ENCODE measurements at regions of chr17 and their contacts with region 1.

Region 1: DNA sequence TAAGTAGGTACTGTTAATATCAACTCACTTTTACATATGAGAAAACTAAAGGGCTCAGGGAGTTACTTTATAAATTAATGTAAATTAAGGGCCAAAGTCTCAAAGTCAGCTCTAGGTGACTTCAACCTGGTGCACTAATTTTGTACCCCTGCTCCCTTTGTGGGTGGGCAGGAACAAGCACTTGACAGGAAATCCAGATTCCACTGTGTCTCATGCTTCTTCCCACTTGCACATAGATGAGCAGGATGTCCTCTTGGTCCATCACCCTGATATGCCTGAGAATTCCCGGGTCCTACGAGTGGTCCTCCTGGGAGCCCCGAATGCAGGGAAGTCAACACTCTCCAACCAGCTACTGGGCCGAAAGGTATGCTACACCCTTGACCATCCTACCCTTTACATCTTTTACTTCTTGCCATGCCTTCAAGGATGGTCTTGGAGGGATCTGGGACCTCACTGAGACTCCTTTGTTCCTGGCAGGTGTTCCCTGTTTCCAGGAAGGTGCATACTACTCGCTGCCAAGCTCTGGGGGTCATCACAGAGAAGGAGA is 1.3 kb downstream of the ERAL1 start:
- DNase-seq: no peak
- H3K4me3 ChIP-seq: peak overlapping the region; percentile 65; the same call in 1 of the 2 replicates
- H3K27ac ChIP-seq: no peak overlapping the region
- H3K4me1 ChIP-seq: peaks cover 5% of the 10 kb centered on the region; the same call in 1 of the 2 replicates
- H3K27me3 ChIP-seq: no peaks in the 10 kb centered on the region
- CTCF ChIP-seq: no peak

Region 2: DNA sequence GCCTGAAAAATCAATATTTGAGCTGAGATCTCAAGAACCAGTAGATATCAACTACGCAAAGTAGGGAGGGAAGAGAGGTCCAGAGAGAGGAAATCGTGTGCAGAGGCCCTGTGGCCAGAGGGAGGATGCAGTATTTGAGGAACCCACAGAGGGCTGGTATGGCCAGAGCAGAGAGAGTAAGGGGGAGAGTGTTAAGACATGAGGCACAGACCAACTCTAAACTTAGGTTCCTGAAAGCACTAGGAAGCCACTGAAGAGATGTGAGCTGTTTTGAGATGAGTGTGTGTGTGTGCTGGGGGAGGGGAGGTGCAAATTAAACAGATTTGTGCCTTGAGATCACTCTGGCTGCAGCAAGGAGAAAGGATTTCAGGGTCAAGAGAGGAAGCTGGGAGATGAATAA is 371.8 kb before region 1 on chr17:
- CTCF ChIA-PET with region 1: no interaction called
- POLR2A ChIA-PET with region 1: interaction called, 10 read pairs
- intact Hi-C with region 1: no loop called
- DNase-seq: no peak
- H3K4me3 ChIP-seq: no peak overlapping the region
- H3K27ac ChIP-seq: no peak overlapping the region
- H3K4me1 ChIP-seq: no peaks in the 10 kb centered on the region
- H3K27me3 ChIP-seq: peaks cover 15% of the 10 kb centered on the region; the same call in 1 of the 2 replicates
- CTCF ChIP-seq: no peak

Region 3: GRCh38 chr17:28889996-28890395 is 33.9 kb after region 1 on chr17:
- CTCF ChIA-PET with region 1: no interaction called
- POLR2A ChIA-PET with region 1: no interaction called
- intact Hi-C with region 1: no loop called
- DNase-seq: no peak
- H3K4me3 ChIP-seq: no peak overlapping the region
- H3K27ac ChIP-seq: no peak overlapping the region
- H3K4me1 ChIP-seq: no peaks in the 10 kb centered on the region
- H3K27me3 ChIP-seq: no peaks in the 10 kb centered on the region
- CTCF ChIP-seq: no peak

Region 4: GRCh38 chr17:29389982-29390850 is 534.1 kb after region 1 on chr17 and contains the start of gene TAOK1:
- CTCF ChIA-PET with region 1: no interaction called
- POLR2A ChIA-PET with region 1: no interaction called
- intact Hi-C with region 1: no loop called
- DNase-seq: peak; percentile 87 to 98
- H3K4me3 ChIP-seq: peak within 1 kb of the TSS; percentile 79
- H3K27ac ChIP-seq: peak within 1 kb of the TSS; percentile 45
- H3K4me1 ChIP-seq: peaks cover 32% of the 10 kb centered on the region
- H3K27me3 ChIP-seq: no peaks in the 10 kb centered on the region
- CTCF ChIP-seq: no peak
- total RNA-seq, gene TAOK1: 39.0 and 51.1 TPM in 2 replicates

Measured in PC-9 (cell line).